Ovary (tissue), 10 donors: ENCODE measurements at regions of chr5 and their contacts with region 1.

Region 1: DNA sequence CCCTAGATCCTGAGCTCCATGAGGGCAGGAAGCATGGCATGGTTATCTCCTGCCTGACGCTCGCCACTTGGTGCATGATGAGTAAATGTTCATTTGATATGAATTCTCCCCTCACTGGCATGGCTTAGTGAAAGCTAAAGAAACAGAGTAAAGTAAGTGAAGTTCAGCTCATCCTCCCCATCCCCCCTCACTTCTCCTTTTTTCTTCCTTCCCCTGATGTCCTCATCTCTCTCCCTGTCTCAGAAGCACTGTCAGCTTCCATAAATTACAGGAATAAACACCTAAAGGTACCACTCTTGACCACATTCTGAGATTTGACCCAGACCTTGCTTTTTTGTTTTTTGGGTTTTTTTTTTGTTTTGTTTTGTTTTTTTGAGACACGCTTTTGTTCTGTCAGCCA is 73.3 kb downstream of the SNX18 start:
- DNase-seq: no peak
- H3K4me3 ChIP-seq: no peak overlapping the region
- H3K27ac ChIP-seq: no peak overlapping the region
- H3K4me1 ChIP-seq: no peaks in the 10 kb centered on the region
- H3K27me3 ChIP-seq: no peaks in the 10 kb centered on the region
- CTCF ChIP-seq: no peak
- EP300 ChIP-seq: no peak
- POLR2A ChIP-seq: no peak

Region 2: GRCh38 chr5:54607006-54607405 is 16.2 kb after region 1 on chr5:
- intact Hi-C with region 1: loop called in 1 of 4 experiments (anchors 2 kb)
- DNase-seq: no peak
- H3K4me3 ChIP-seq: no peak overlapping the region
- H3K27ac ChIP-seq: no peak overlapping the region
- H3K4me1 ChIP-seq: peaks cover 1% of the 10 kb centered on the region
- H3K27me3 ChIP-seq: no peaks in the 10 kb centered on the region
- CTCF ChIP-seq: no peak
- EP300 ChIP-seq: no peak
- POLR2A ChIP-seq: no peak